CD4-positive, alpha-beta memory T cell (primary cell): ENCODE measurements at regions of chr18 and their contacts with region 1.

Region 1: DNA sequence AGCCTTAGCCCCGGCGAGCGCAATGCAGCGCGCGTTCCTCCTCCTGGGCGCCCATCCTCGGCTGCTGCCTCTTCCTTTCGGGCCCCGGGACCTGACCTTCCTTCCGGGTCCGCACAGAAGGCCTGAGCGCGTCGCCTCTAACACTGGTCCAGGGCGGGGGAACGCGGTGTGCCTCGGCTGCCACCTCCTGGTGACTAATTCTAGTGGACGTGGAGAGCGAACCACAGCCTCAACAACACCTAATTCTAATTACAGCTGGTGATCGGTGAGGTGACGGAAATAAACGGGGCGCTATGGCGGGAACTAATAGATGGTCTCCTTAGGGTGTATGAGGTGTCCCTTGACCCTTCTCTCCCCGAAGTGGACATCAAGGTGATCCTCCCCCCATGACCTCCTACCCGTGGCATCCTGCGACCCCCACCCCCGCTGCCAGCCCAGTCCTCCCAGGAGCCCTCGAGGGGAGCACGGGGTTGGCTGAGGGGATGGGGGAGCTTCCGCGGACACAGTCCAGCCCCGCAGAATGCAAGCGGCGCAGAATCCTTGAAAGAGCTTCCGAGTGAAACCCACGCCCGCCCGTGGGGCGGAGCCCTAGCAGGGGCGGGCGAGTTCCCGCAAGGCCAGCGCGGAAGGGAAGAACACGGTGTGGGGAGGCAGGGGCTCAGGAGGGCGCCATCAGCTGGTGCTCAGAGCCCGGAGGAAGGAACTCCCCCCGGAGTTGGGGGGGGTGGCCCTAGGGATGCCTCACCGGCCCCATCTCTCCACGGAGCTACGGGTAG is 12.8 kb upstream of the HMSD start:
- DNase-seq: peak; percentile 34 to 61 (median 44)
- H3K4me3 ChIP-seq: peak overlapping the region; percentile 27 to 55
- H3K4me3 Mint-ChIP-seq: peak overlapping the region in 6 of 8 donors; percentile 69 to 83 (median 77)
- H3K27ac ChIP-seq: no peak overlapping the region
- H3K27ac Mint-ChIP-seq: no peak overlapping the region
- H3K4me1 ChIP-seq: peaks cover 14% of the 10 kb centered on the region
- H3K4me1 Mint-ChIP-seq: peaks cover 0 to 5% (median 2%) of the 10 kb centered on the region in 4 donors
- H3K27me3 ChIP-seq: peaks cover 5% of the 10 kb centered on the region
- H3K27me3 Mint-ChIP-seq: peaks cover 3 to 9% of the 10 kb centered on the region in 2 donors

Region 2: GRCh38 chr18:63511286-63511685 is 425.1 kb before region 1 on chr18:
- CTCF ChIA-PET with region 1: interaction called, 67 read pairs
- POLR2A ChIA-PET with region 1: no interaction called
- intact Hi-C with region 1: no loop called
- DNase-seq: no peak
- H3K4me3 ChIP-seq: no peak overlapping the region
- H3K4me3 Mint-ChIP-seq: no peak overlapping the region
- H3K27ac ChIP-seq: no peak overlapping the region
- H3K27ac Mint-ChIP-seq: no peak overlapping the region
- H3K4me1 ChIP-seq: no peaks in the 10 kb centered on the region
- H3K4me1 Mint-ChIP-seq: no peaks in the 10 kb centered on the region
- H3K27me3 ChIP-seq: peaks cover 3% of the 10 kb centered on the region
- H3K27me3 Mint-ChIP-seq: peaks cover 19 to 33% of the 10 kb centered on the region in 2 donors

Region 3: GRCh38 chr18:63823518-63824219 is 112.7 kb before region 1 on chr18:
- CTCF ChIA-PET with region 1: interaction called, 14 read pairs
- POLR2A ChIA-PET with region 1: no interaction called
- intact Hi-C with region 1: loop called (anchors 1 kb)
- DNase-seq: peak in 1 of 5 donors; percentile 3
- H3K4me3 ChIP-seq: no peak overlapping the region
- H3K4me3 Mint-ChIP-seq: no peak overlapping the region
- H3K27ac ChIP-seq: no peak overlapping the region
- H3K27ac Mint-ChIP-seq: no peak overlapping the region
- H3K4me1 ChIP-seq: no peaks in the 10 kb centered on the region
- H3K4me1 Mint-ChIP-seq: no peaks in the 10 kb centered on the region
- H3K27me3 ChIP-seq: no peaks in the 10 kb centered on the region
- H3K27me3 Mint-ChIP-seq: peaks cover 6 to 11% of the 10 kb centered on the region in 2 donors